ENCODE measurements at regions of chr17 and their contacts with region 1.

Region 1: GRCh38 chr17:32319548-32319905 is 22.4 kb downstream of the C17orf75 start:
- DNase-seq: peak; percentile 88
- ATAC-seq: peak; percentile 93
- H3K4me3 Mint-ChIP-seq: peak overlapping the region; percentile 58
- H3K27ac Mint-ChIP-seq: no peak overlapping the region
- H3K4me1 Mint-ChIP-seq: peaks cover 12% of the 10 kb centered on the region
- H3K27me3 Mint-ChIP-seq: peaks cover 10% of the 10 kb centered on the region

Region 2: GRCh38 chr17:31388770-31389661 is 930.5 kb before region 1 on chr17:
- CTCF ChIA-PET with region 1: no interaction called
- POLR2A ChIA-PET with region 1: no interaction called
- intact Hi-C with region 1: no loop called
- DNase-seq: peak; percentile 63
- ATAC-seq: peak; percentile 53
- H3K4me3 Mint-ChIP-seq: no peak overlapping the region
- H3K27ac Mint-ChIP-seq: no peak overlapping the region
- H3K4me1 Mint-ChIP-seq: peaks cover 3% of the 10 kb centered on the region
- H3K27me3 Mint-ChIP-seq: peaks cover 26% of the 10 kb centered on the region

Region 3: GRCh38 chr17:32206861-32207260 is 112.7 kb before region 1 on chr17:
- CTCF ChIA-PET with region 1: interaction called, 13 read pairs
- POLR2A ChIA-PET with region 1: no interaction called
- intact Hi-C with region 1: loop called in 1 of 2 experiments (anchors 1 kb)
- DNase-seq: no peak
- ATAC-seq: no peak
- H3K4me3 Mint-ChIP-seq: no peak overlapping the region
- H3K27ac Mint-ChIP-seq: no peak overlapping the region
- H3K4me1 Mint-ChIP-seq: no peaks in the 10 kb centered on the region
- H3K27me3 Mint-ChIP-seq: no peaks in the 10 kb centered on the region

Region 4: DNA sequence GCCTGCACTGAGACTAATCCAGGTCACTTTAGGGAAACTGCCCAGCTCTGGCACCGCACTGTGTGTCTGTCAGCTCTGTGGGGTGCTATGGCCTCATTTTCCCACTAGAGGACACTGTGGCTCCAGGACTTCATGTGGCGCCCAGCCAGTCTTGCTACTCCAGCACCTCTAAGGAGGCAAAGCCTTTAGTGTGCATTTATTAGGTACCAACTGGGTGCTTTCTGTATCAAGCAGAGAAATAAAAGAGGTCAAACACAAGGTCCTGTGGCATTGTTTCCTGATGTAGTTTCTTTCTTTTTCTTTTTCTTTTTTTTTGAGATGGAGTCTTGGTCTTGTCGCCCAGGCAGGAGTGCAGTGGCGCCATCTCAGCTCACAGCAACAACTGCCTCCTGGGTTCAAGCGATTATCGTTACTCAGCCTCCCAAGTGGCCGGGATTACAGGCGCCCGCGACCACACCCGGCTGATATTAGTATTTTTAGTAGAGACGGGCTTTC is 66.4 kb before region 1 on chr17:
- CTCF ChIA-PET with region 1: interaction called, 23 read pairs
- POLR2A ChIA-PET with region 1: no interaction called
- intact Hi-C with region 1: loop called (anchors 1 kb)
- DNase-seq: peak; percentile 85
- ATAC-seq: peak; percentile 100
- H3K4me3 Mint-ChIP-seq: no peak overlapping the region
- H3K27ac Mint-ChIP-seq: no peak overlapping the region
- H3K4me1 Mint-ChIP-seq: no peaks in the 10 kb centered on the region
- H3K27me3 Mint-ChIP-seq: no peaks in the 10 kb centered on the region

Region 5: DNA sequence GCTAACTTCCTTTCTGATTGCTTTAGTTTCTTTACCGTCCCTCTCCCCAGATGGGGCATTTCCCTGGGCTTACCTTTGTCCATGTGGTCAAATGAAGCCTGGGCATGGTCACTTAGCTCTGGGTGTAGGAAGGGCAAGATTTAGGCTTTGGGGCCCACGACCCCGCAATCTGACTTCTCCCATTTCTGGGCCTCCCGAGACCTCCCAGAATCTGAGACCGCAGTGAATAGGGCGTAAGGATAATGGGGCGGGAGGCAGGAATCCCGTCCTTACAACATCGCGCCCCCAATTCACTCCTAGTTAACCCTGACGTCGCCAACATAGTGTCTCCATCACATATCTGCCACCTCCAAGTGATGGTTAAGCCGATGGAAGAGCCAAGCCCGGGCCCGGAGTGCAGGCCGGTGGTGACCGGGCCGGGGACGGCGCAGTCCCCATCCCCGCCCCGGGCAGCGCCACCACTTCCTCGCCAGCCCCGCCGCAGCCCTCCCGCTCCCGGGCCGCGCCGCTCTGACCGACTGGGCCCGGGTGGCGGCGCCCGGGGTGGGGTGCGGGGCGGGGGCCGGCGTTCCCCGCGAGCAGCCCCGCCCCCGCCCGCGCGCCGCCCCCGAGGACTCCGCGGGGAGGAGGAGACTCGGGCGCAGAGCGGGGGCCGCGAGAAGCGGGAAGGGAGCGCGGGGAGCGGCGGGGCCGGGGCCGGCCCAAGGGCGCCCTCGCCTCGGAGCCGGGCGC is 54.2 kb before region 1 on chr17 and contains the start of gene RHBDL3:
- CTCF ChIA-PET with region 1: interaction called, 3 read pairs
- POLR2A ChIA-PET with region 1: no interaction called
- intact Hi-C with region 1: loop called in 1 of 2 experiments (anchors 5 kb)
- DNase-seq: peak; percentile 27
- ATAC-seq: peak; percentile 35
- H3K4me3 Mint-ChIP-seq: peak within 1 kb of the TSS; percentile 51
- H3K27ac Mint-ChIP-seq: no peak within 1 kb of the TSS
- H3K4me1 Mint-ChIP-seq: peaks cover 8% of the 10 kb centered on the region
- H3K27me3 Mint-ChIP-seq: peaks cover 58% of the 10 kb centered on the region
- total RNA-seq, gene RHBDL3: 0.09 TPM in 1 of 2 experiments, not detected in the other

Region 6: DNA sequence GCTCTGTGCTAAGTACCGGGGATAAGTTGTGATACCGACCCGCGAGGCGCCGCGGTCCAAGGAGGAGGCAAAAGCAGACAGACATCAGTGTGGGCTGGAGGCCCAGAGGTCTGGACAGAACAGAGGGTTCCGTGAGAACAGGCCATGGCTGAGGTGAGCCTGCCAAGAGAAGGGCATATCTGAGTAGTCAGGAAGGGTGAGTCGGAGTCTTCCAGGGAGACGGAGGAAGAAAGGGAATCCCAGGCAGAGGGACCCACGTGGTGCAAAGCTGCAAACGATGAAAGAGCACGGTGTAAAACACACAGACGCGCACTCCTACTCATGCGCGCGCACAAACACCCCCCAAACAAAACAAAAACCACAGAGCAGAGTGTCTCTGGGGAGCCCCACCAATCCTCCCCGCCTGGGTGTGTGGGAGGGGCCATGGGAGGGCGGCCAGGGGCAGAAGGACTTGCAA is 35.8 kb before region 1 on chr17:
- CTCF ChIA-PET with region 1: no interaction called
- POLR2A ChIA-PET with region 1: no interaction called
- intact Hi-C with region 1: no loop called
- DNase-seq: no peak
- ATAC-seq: no peak
- H3K4me3 Mint-ChIP-seq: no peak overlapping the region
- H3K27ac Mint-ChIP-seq: no peak overlapping the region
- H3K4me1 Mint-ChIP-seq: no peaks in the 10 kb centered on the region
- H3K27me3 Mint-ChIP-seq: peaks cover 2% of the 10 kb centered on the region

Region 7: DNA sequence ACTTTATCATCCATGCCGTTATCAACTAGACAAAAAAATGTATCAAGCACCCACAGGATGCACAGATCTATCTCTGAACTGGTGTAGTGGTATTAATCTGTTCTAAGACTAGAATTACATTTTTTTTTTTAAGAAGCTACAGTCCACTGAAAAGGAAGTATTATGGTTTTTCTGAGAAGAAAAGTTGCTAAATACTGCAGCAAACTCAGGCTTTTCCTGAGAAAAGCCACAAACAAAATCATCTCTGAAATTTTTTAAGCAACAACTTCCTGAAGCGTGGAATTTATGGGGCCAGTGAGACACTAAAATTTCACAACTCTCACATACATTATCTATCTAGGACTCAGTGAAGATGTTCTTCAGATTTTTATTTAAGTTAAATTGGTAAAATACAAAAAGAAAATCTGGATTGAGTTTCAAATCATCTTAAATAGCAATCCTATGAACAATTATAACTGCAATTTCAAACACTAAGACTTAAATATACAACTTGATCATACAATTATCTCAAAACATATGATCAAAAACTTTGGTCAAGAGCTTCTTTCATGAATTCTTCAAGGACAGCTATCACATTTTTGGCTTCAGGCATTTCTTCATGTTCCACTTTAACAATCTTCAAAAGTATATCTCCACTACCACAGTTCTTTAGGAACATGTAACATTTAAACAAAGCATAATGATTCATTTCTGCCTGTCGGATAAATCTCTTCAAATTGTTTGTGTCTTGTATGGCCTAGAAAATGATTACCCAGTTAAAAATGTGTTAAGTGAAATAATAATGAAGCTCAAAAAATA is 11.9 kb after region 1 on chr17:
- CTCF ChIA-PET with region 1: interaction called, 10 read pairs
- POLR2A ChIA-PET with region 1: no interaction called
- intact Hi-C with region 1: no loop called
- DNase-seq: no peak
- ATAC-seq: peak; percentile 63
- H3K4me3 Mint-ChIP-seq: no peak overlapping the region
- H3K27ac Mint-ChIP-seq: peak overlapping the region; percentile 49
- H3K4me1 Mint-ChIP-seq: peaks cover 18% of the 10 kb centered on the region
- H3K27me3 Mint-ChIP-seq: no peaks in the 10 kb centered on the region

Region 8: GRCh38 chr17:32361270-32361669 is 41.7 kb after region 1 on chr17:
- CTCF ChIA-PET with region 1: no interaction called
- POLR2A ChIA-PET with region 1: no interaction called
- intact Hi-C with region 1: no loop called
- DNase-seq: no peak
- ATAC-seq: no peak
- H3K4me3 Mint-ChIP-seq: no peak overlapping the region
- H3K27ac Mint-ChIP-seq: no peak overlapping the region
- H3K4me1 Mint-ChIP-seq: peaks cover 29% of the 10 kb centered on the region
- H3K27me3 Mint-ChIP-seq: no peaks in the 10 kb centered on the region

Measured in activated CD4-positive, alpha-beta T cell treated with anti-CD3 and anti-CD28 coated beads for 36 hours (primary cell).